ENCODE measurements at regions of chr3 and their contacts with region 1.

Region 1: DNA sequence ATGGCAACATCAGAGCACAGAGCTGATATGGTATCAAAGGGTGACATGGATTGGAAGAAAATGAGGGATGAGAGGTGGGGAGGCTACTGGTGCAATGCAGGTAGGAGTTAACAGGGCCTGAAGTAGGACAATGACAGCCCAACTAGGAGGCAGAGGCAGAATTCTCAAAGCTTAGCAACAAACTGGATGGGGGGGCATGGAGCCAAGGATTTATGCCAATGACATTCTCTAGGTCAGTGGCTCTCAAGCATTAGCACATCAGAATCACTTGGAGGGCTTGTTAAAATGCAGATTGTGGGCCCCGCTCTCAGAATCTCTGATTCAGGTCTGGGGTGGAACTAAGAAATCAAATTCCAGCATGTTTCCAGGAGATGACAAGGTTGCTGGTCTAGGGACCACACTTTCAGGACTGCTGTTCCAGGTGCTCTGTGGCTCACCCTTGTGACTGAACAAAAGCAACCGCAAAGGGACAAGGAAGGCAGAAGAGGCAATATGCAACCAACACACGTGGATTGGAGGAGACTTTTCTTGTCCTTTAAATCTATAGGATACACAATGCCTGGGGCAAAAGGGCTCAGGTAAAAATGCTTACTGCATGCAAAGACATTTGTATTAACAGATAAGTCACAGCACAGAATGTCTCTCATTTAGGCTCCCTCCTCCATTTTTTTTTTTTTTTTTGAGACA is 98.1 kb upstream of the TNIK start:
- DNase-seq: no peak

Region 2: DNA sequence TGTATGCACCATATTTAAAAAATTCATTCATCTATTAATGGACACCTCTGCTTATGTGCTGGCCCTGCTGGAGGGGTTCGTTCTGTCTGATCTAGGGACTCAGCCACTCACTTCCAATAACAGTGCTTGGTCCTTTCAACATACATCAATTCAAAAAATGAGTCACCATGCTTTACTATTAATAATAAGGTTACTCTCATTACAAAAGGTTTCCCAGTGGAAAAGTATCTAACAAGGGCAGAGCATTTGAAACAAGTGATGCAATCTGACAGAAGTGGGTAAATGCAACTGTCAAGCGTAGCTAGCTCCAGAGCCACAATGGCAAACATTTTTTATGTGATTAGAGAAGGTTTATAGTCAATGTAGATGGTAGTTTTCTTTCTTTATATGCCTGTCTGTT is 30.2 kb before region 1 on chr3:
- intact Hi-C with region 1: loop called in 1 of 2 experiments (anchors 1 kb)
- DNase-seq: no peak